ENCODE measurements at regions of chr17 and their contacts with region 1.

Region 1: DNA sequence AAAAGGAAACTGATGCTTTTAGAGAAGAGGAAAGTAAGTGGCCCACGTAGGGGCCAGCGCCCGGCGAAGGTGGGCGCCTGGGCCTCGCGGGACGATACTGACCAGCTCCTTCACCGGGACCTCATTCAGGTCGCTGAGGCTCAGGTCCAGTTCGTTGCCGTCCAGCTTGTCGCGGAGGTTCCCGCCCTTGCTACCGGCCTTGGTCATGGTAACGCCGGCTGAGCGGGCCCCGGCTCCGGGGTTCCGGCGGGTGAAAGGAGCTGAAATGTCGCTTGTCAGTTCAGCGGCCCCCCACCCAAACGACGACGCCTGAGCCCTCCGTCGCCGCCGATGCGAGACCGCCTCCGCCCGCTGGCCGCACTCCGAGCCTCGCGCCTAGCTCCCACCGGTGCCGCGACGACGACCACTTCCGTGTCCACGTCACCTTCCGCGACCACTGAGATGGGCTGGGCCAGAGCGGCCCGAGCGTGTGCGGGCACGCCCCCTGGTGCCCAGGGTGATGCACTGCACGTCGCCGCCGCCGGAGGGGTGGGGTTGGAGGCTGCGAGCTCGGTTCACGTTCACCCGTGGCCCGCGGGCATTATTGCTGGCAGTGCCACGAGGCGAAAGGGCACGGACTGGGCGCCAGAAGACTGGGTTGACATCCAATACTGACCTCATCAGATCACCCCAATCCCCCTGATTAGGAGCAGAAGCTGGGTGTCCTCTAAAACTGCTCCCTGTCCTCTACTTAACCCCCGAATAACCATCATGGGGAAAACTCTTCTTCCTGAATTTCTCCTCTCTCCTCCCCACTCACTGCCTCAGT is at the start of gene LRRC59:
- DNase-seq: peak; percentile 91
- H3K4me3 ChIP-seq: peak within 1 kb of the TSS; percentile 83
- H3K27ac ChIP-seq: peak within 1 kb of the TSS; percentile 86
- H3K4me1 ChIP-seq: peaks cover 9% of the 10 kb centered on the region
- H3K27me3 ChIP-seq: no peaks in the 10 kb centered on the region
- CTCF ChIP-seq: peak; percentile 99
- total RNA-seq, gene LRRC59: 147 to 265 TPM

Region 2: DNA sequence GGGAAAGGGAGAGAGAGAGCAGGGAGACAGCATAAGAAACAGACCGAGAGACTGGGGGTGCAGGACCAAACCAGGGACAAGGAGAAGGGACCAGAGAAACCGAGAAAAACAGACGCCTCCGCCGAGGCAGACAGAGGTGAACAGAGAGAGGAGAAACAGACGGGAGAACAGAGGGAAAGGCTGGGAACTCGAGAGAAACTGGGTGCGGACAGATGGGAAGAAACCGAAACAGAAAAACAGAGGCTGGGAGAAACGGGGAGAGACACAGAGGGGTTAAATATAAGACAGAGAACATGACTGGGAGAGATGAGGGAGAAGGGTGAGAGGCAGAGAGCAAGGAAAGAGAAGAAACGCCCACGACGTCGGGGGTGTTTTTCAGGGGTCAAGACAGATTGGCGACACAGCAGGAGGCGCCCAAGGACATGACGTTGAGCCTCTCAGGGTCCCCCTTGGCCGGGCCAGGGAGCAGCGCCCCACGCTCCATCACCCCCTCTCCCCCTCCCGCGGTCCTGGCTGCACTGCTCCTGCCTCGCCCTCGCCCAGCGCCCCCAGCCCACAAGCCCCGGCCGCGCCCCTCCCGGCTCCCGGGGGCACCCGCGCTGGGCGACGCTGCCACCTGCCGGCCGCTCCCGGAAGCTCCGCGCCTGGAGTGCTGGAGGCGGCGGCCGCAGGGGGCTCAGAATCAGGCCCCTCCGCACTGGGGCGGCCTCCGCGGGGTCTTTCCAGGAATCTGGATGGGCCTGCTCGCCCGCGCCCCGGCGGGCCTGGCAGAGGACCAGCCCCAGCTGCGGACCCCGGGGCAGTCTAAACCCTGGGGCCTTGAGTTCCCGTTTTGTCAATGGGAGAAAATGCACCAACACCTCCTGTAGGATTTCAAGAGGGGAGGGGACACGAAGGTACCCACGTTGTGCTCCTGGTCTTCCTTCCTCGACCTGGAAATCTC is 124.3 kb before region 1 on chr17:
- intact Hi-C with region 1: no loop called
- DNase-seq: peak; percentile 74
- H3K4me3 ChIP-seq: peak overlapping the region; percentile 54
- H3K27ac ChIP-seq: peak overlapping the region; percentile 47
- H3K4me1 ChIP-seq: peaks cover 4% of the 10 kb centered on the region
- H3K27me3 ChIP-seq: no peaks in the 10 kb centered on the region
- CTCF ChIP-seq: peak; percentile 94

Region 3: GRCh38 chr17:50361561-50362480 is 35.5 kb before region 1 on chr17:
- intact Hi-C with region 1: loop called (anchors 5 kb)
- DNase-seq: peak; percentile 67
- H3K4me3 ChIP-seq: no peak overlapping the region
- H3K27ac ChIP-seq: no peak overlapping the region
- H3K4me1 ChIP-seq: peaks cover 5% of the 10 kb centered on the region
- H3K27me3 ChIP-seq: no peaks in the 10 kb centered on the region
- CTCF ChIP-seq: peak; percentile 85

Measured in colonic mucosa (tissue), 4 donors.